Sigmoid colon (tissue), 7 donors: ENCODE measurements at regions of chr6 and their contacts with region 1.

Region 1: GRCh38 chr6:137415127-137415833 is 78.9 kb downstream of the OLIG3 start:
- DNase-seq: peak; percentile 71
- H3K4me3 ChIP-seq: peak overlapping the region; percentile 13 to 52 (median 36)
- H3K27ac ChIP-seq: peak overlapping the region in 3 of 4 donors; percentile 8 to 69 (median 47)
- H3K4me1 ChIP-seq: peaks cover 0 to 10% (median 4%) of the 10 kb centered on the region in 4 donors
- H3K27me3 ChIP-seq: peaks cover 0 to 10% (median 0%) of the 10 kb centered on the region in 3 donors
- CTCF ChIP-seq: peak in 2 of 4 experiments; percentile 44 to 55
- EP300 ChIP-seq: no peak
- POLR2A ChIP-seq: no peak

Region 2: DNA sequence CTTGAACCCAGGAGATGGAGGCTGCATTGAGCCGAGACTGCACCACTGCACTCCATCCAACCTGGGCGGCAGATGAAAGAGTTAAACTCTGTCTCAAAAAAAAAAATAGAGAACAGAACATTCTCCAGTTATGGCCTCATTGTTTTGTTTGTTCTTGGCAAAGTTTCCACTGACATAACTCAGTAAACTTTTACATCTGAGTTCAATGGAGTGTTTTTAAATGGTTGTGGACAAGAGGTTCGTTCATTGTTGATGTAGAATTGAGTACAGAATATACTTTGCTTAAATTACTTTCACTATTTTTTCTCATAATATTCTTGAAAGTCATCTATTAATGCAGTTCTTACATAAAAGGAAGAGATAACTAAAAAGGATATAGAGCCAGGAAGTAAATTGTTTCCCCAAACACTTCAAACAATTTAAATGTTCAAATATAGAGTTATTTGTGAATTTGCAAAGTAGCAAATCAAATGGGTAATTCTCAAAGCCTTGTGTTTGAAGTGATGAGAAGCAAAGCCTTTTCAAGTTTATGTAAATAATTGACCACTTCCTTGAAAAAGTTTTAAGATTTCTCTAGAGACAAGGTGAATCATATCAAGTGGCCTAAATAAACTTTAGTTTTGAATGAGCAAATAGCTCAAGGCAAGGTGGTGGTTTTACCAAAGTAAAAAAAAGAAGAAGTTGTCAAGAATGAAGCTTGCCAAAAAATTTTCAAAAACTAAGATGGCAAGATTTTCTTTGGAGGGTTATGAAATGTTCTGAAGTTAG is 153.7 kb before region 1 on chr6:
- intact Hi-C with region 1: loop called (anchors 10 kb)
- DNase-seq: no peak
- H3K4me3 ChIP-seq: no peak overlapping the region
- H3K27ac ChIP-seq: peak overlapping the region in 3 of 4 donors; percentile 32 to 62 (median 38)
- H3K4me1 ChIP-seq: peaks cover 0 to 16% (median 7%) of the 10 kb centered on the region in 4 donors
- H3K27me3 ChIP-seq: no peaks in the 10 kb centered on the region
- CTCF ChIP-seq: no peak
- EP300 ChIP-seq: no peak
- POLR2A ChIP-seq: no peak

Region 3: DNA sequence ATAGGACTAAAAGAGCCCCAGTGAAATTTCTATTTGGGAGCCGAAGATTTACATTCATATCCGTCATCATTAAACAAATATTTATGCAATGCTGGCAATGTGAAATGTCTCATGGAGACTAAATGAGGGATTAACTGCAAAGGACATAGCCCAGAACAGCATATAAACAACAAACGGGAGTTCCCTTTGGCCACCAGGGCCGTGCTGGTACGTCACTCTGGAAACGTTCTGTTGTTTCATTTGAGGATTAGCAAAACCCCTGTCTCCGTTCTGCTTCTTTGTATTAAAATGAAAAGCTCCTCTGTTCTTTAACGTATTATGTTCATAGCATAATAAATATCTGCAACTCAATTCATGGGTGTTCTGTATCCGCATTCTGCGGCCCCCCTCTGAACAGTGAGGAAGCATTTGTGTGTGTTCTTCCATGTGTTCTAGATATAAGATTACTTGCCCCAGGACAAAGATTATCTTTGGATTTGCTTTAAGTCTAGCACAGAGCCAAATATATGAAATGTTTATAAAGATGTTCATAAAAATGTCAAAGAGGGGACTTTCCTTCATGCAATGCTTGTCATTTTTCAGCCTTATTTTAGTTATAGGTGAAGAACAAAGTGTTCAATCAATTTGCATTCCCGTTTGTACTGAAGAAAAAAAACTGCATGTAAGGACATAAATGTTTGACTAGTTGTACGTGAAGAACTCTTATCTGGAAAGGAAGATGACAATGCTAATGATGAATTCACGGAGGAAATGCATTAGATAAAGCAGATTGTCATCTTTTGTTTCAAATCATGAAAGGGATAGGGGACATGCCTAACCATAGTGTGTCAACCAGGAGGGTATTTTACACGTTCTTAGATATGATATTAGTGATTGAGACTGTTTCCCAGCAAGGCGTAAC is 361.8 kb after region 1 on chr6:
- intact Hi-C with region 1: no loop called
- DNase-seq: no peak
- H3K4me3 ChIP-seq: no peak overlapping the region
- H3K27ac ChIP-seq: peak overlapping the region; percentile 9 to 88 (median 50)
- H3K4me1 ChIP-seq: peaks cover 0 to 59% (median 31%) of the 10 kb centered on the region in 4 donors
- H3K27me3 ChIP-seq: no peaks in the 10 kb centered on the region
- CTCF ChIP-seq: peak in 1 of 4 experiments; percentile 21
- EP300 ChIP-seq: peak in 2 of 4 donors; percentile 9 to 26
- POLR2A ChIP-seq: no peak